ENCODE measurements at regions of chr6 and their contacts with region 1.

Region 1: DNA sequence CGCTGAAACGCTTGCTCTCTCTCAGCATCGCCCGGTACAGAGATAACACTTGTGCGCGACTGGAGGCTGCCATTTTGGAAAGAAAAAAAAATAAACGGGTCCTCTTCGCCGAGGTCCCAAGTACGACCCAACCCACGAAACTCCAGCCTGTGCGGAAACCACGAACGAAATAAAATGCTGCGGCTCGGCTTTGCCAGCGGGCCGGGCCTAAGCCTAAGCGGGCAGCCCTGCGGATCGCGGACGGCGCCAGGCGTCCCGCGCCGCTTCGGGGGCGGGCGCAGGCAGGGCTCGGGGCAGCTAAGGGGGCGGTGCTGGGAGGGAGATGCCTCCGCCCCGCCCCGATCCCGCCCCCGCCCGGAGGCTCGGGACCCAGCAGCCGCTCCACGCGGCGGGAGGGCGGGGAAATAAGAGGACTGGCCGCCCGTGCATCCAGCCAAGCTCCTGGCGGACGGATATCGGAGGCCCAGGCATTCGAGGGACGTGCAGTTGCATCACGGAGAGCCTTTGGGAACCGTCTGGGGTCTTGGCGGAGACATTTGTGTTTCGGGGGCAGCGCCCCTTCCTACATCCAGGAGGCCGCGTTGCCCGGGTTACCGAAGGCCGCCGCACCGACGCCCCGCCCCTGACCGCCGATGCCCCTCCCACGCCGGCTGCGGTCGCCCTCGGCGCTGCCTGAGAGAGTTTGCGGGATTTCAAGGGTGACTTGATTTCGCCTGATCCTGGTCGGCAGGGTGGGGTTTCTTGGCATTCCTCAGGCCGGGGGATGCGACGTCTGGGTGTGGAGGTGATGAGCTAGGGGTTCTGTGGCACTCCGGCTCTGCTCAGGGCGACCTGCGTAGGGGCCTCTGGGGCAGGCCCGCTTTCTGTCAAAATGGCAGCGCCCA is at the starts of genes FARS2 and LYRM4:
- DNase-seq: peak; percentile 98
- H3K4me3 Mint-ChIP-seq: peak within 1 kb of the TSS; percentile 89
- H3K27ac Mint-ChIP-seq: peak within 1 kb of the TSS; percentile 100
- H3K4me1 Mint-ChIP-seq: peaks cover 36% of the 10 kb centered on the region
- H3K27me3 Mint-ChIP-seq: no peaks in the 10 kb centered on the region
- total RNA-seq, gene FARS2: 21.5 and 24.7 TPM in 2 replicates
- total RNA-seq, gene LYRM4: 49.4 and 50.3 TPM in 2 replicates

Region 2: GRCh38 chr6:4693173-4693970 is 567.5 kb before region 1 on chr6:
- intact Hi-C with region 1: no loop called
- DNase-seq: no peak
- H3K4me3 Mint-ChIP-seq: no peak overlapping the region
- H3K27ac Mint-ChIP-seq: no peak overlapping the region
- H3K4me1 Mint-ChIP-seq: no peaks in the 10 kb centered on the region
- H3K27me3 Mint-ChIP-seq: no peaks in the 10 kb centered on the region

Region 3: DNA sequence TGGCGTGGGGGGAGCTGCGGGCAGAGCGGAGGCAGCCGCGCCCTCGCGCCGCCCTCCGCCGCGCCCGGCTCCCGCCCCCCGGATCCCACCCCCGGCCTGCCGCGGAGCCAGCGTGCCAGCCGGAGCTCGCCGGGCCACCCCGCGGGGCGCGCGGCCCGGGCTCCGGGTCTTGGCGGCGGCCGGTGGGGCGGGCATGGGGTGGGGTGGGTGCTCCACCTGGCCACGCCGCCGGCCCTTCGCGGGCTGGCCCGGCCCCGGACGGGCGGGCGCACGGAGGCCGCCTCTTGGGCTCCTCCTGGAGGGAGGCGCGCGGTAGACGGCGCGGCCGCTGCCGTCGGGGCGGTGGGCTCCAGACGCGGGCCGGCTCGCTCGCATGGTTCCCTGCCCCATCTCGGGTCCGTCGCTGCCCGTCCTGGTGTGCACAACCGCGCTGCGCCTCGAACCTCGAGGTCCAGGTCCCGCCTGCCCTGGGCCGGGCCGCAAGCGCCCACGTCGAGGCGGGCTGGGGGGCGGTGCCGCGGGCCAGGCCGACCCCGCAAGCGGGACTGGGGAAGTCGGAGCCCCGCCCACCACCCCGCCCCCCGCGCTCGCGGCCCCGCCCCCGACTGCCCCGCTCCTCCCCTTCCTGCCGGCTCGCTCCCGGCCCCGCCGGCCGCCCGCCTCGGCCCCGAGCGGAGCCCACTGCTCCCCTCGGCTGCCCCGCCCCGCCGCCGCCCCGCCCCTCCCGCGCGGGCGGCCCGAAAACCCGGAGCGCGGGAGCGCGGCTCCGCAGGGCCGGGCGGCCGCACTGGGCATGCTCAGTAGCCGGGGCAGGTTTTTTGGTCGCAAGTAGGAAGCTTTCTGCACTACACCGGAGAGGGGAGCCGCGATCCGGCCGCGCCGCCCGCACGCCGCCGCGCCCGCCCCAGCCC is 485.1 kb before region 1 on chr6 and contains the start of gene CDYL:
- intact Hi-C with region 1: loop called (anchors 5 kb)
- DNase-seq: peak; percentile 97
- H3K4me3 Mint-ChIP-seq: peak within 1 kb of the TSS; percentile 85
- H3K27ac Mint-ChIP-seq: peak within 1 kb of the TSS; percentile 87
- H3K4me1 Mint-ChIP-seq: peaks cover 37% of the 10 kb centered on the region
- H3K27me3 Mint-ChIP-seq: peaks cover 35% of the 10 kb centered on the region
- total RNA-seq, gene CDYL: 23.4 and 24.4 TPM in 2 replicates

Region 4: GRCh38 chr6:5143634-5144311 is 117.1 kb before region 1 on chr6:
- intact Hi-C with region 1: loop called (anchors 1 kb)
- DNase-seq: peak; percentile 94
- H3K4me3 Mint-ChIP-seq: no peak overlapping the region
- H3K27ac Mint-ChIP-seq: no peak overlapping the region
- H3K4me1 Mint-ChIP-seq: peaks cover 4% of the 10 kb centered on the region
- H3K27me3 Mint-ChIP-seq: no peaks in the 10 kb centered on the region

Region 5: GRCh38 chr6:5199283-5199682 is 61.6 kb before region 1 on chr6:
- intact Hi-C with region 1: loop called (anchors 2 kb)
- DNase-seq: no peak
- H3K4me3 Mint-ChIP-seq: no peak overlapping the region
- H3K27ac Mint-ChIP-seq: peak overlapping the region; percentile 14
- H3K4me1 Mint-ChIP-seq: peaks cover 5% of the 10 kb centered on the region
- H3K27me3 Mint-ChIP-seq: no peaks in the 10 kb centered on the region

Region 6: GRCh38 chr6:5246141-5247097 is 14.5 kb before region 1 on chr6:
- intact Hi-C with region 1: no loop called
- DNase-seq: no peak
- H3K4me3 Mint-ChIP-seq: no peak overlapping the region
- H3K27ac Mint-ChIP-seq: no peak overlapping the region
- H3K4me1 Mint-ChIP-seq: peaks cover 3% of the 10 kb centered on the region
- H3K27me3 Mint-ChIP-seq: no peaks in the 10 kb centered on the region

Region 7: DNA sequence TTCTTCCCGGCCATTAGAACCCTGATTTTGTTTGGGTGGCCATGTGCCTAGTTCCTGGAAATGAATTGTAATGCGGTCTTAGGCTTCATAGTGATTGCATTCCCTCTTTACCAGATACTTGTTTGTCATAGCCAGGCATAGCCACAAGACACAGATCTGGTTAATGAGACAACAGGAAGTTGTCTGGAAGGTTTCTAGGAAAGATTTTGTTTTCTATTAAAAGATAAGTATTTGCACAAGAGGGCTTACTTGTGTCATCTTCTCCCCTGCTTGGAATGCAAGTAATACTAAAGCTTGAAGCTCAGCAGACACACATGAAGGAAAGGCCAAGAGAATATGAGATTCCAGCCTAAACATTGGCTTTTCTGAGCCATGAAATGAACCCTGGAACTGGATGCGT is 13.3 kb after region 1 on chr6:
- intact Hi-C with region 1: no loop called
- DNase-seq: no peak
- H3K4me3 Mint-ChIP-seq: peak overlapping the region; percentile 36
- H3K27ac Mint-ChIP-seq: peak overlapping the region; percentile 39
- H3K4me1 Mint-ChIP-seq: peaks cover 41% of the 10 kb centered on the region
- H3K27me3 Mint-ChIP-seq: no peaks in the 10 kb centered on the region

Region 8: GRCh38 chr6:5302995-5303622 is 42.2 kb after region 1 on chr6:
- intact Hi-C with region 1: loop called (anchors 1 kb)
- DNase-seq: peak; percentile 85
- H3K4me3 Mint-ChIP-seq: peak overlapping the region; percentile 36
- H3K27ac Mint-ChIP-seq: no peak overlapping the region
- H3K4me1 Mint-ChIP-seq: peaks cover 21% of the 10 kb centered on the region
- H3K27me3 Mint-ChIP-seq: no peaks in the 10 kb centered on the region

Region 9: GRCh38 chr6:5398530-5398929 is 137.6 kb after region 1 on chr6:
- intact Hi-C with region 1: loop called (anchors 2 kb)
- DNase-seq: peak; percentile 64
- H3K4me3 Mint-ChIP-seq: no peak overlapping the region
- H3K27ac Mint-ChIP-seq: no peak overlapping the region
- H3K4me1 Mint-ChIP-seq: peaks cover 6% of the 10 kb centered on the region
- H3K27me3 Mint-ChIP-seq: no peaks in the 10 kb centered on the region